ENCODE measurements at regions of chr2 and their contacts with region 1.

Region 1: DNA sequence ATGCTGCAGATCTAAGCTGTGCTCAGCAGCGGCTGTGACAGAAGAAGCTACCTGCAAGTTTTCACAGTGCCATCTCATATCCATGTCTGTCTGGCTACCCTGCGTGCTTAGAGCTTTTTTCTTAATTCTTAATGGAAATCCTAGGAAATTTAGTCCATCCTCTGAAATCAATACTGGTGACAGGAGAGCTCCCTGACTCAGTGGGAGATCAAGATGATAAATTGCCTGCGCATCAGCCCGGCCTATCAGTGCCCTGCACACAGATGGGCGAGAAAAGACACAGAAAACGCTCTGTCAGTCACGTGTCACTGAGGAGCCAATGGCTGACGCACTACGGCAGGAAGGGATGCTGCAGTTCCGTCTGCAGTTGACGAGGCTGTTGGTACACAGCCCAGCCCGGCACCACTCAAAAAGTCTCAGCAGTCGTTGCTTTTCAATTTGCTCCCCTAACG is 819.6 kb upstream of the FSHR start:
- DNase-seq: peak; percentile 31 to 64 (median 52)
- ATAC-seq: peak; percentile 99
- H3K4me3 ChIP-seq: peak overlapping the region; percentile 52
- H3K4me3 Mint-ChIP-seq: peak overlapping the region; percentile 59 to 93 (median 87)
- H3K27ac ChIP-seq: no peak overlapping the region
- H3K27ac Mint-ChIP-seq: peak overlapping the region in 8 of 9 donors; percentile 37 to 95 (median 83)
- H3K4me1 ChIP-seq: no peaks in the 10 kb centered on the region
- H3K4me1 Mint-ChIP-seq: peaks cover 0 to 10% (median 5%) of the 10 kb centered on the region in 7 donors
- H3K27me3 ChIP-seq: no peaks in the 10 kb centered on the region
- H3K27me3 Mint-ChIP-seq: peaks cover 0 to 5% (median 0%) of the 10 kb centered on the region in 5 donors

Region 2: DNA sequence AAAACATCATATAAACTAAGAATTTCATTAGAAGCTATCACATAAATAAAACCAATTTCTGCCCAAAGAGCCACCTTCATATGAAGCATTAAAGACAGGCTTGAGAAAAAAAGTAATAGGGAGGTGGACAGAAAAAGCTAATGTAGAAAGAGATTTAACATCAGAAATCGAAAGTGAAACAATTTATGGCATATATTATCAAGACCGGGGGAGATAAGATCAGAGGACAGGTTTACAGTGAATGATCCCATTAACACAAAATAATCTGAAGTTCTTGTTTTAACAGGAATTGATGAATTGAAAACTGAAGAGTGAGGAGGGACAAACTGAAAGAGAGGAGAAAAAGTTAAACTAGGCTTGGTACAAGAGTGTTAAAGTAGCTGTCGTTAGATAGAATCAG is 33.3 kb before region 1 on chr2:
- CTCF ChIA-PET with region 1: no interaction called
- POLR2A ChIA-PET with region 1: no interaction called
- intact Hi-C with region 1: loop called (anchors 2 kb)
- DNase-seq: peak in 2 of 9 donors; percentile 7 to 9
- ATAC-seq: no peak
- H3K4me3 ChIP-seq: peak overlapping the region; percentile 8
- H3K4me3 Mint-ChIP-seq: peak overlapping the region; percentile 65 to 91 (median 82)
- H3K27ac ChIP-seq: no peak overlapping the region
- H3K27ac Mint-ChIP-seq: peak overlapping the region in 8 of 9 donors; percentile 2 to 80 (median 61)
- H3K4me1 ChIP-seq: no peaks in the 10 kb centered on the region
- H3K4me1 Mint-ChIP-seq: peaks cover 12 to 30% (median 19%) of the 10 kb centered on the region in 7 donors
- H3K27me3 ChIP-seq: no peaks in the 10 kb centered on the region
- H3K27me3 Mint-ChIP-seq: no peaks in the 10 kb centered on the region

Measured in naive thymus-derived CD4-positive, alpha-beta T cell (primary cell).